BJ (cell line): ENCODE measurements at regions of chr2 and their contacts with region 1.

Region 1: DNA sequence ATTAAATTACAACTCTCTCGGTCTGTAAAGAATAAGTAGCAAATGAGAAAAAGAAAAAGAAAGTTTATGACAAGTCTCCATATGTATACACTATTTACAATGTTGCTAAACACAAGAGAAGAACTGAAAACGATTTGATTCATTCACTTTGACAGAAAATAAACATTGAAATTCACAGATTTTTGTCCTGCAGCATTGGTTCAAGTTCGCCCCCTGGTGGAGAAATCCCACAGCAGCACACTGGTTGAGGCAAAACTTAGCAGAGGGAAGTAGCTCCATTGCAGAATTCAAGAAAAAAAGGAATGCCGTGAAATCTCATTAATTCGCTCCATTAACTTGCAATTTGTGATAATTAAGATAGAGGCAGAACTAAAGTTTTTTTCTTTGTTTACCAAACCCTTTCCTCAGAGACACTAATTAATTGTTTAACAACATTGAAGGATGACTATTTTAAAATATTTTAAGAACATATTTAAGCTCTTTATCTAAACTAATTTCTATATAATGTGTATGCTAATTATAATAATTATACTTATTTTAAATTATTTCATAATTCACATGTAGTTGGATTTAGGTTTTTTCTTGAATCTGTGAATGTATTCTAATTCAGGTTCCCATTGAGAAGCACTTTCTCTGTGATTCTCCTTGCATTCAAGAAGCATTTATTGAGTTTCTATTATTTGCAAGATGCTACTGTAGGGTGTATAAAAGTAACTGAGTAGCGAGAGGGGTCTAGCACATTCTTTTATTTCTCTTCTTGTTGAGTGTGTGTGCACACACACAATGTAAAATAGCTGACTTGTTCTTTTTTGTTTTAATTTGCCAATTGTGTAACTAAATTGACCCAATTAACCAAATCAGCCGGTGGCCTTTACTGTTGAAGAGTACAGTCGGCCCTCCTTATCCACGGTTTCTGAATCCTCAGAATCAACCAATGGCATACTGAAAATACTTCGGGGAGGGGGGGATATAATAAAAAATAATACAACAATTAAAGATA is 74.1 kb downstream of the COL4A3 start:
- DNase-seq: no peak
- H3K4me3 ChIP-seq: no peak overlapping the region
- H3K27me3 ChIP-seq: no peaks in the 10 kb centered on the region; the same call in 1 of the 2 replicates
- CTCF ChIP-seq: peak; percentile 94

Region 2: GRCh38 chr2:227125506-227125905 is 113.0 kb before region 1 on chr2:
- CTCF ChIA-PET with region 1: interaction called, 88 read pairs
- POLR2A ChIA-PET with region 1: no interaction called
- DNase-seq: no peak
- H3K4me3 ChIP-seq: no peak overlapping the region
- H3K27me3 ChIP-seq: no peaks in the 10 kb centered on the region; the same call in 1 of the 2 replicates
- CTCF ChIP-seq: peak; percentile 15; the same call in 1 of the 2 replicates

Region 3: DNA sequence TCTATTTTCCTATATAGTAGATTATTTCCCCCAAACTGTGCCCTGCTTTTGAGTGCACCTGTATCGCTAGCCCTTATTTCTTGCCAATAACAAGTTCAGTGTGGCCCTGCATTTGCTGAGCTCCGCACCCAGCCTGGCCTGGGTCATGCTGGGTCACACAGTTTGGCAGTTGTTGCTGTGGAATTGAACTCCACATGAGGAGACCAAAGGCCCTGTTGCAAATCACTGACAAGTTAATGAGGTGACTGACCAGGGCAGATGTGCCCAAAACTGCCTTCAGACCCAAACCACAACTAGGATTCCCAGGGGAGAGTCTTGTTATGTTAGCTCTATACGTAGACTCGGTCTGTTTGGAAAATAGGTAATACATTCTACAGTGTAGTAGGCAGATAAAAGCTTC is 105.6 kb before region 1 on chr2:
- CTCF ChIA-PET with region 1: interaction called, 88 read pairs
- POLR2A ChIA-PET with region 1: no interaction called
- DNase-seq: no peak
- H3K4me3 ChIP-seq: no peak overlapping the region
- H3K27me3 ChIP-seq: no peaks in the 10 kb centered on the region; the same call in 1 of the 2 replicates
- CTCF ChIP-seq: no peak

Region 4: DNA sequence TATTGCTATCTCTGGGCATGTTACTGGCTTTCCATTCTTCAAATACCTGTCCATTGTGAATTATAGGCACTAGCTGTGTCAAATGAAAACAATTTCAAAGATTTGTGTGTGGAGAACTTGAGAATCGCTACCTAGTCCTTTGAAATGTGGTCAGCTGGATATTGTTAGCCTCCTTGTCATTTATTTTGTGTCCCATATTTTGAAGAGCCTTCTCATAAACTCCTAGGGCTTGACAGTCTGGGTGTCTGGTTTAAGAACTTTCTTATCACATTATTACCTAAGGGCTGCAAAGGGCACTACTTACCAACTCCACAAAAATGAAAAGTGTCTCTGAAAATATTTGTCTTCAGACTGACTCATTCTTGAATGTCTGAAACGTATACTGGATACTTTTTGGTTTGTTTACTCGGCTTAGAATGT is 23.9 kb before region 1 on chr2:
- CTCF ChIA-PET with region 1: no interaction called
- POLR2A ChIA-PET with region 1: no interaction called
- DNase-seq: no peak
- H3K4me3 ChIP-seq: no peak overlapping the region
- H3K27me3 ChIP-seq: no peaks in the 10 kb centered on the region
- CTCF ChIP-seq: no peak

Region 5: GRCh38 chr2:227252831-227253230 is 14.3 kb after region 1 on chr2:
- CTCF ChIA-PET with region 1: interaction called, 27 read pairs
- POLR2A ChIA-PET with region 1: no interaction called
- DNase-seq: no peak
- H3K4me3 ChIP-seq: no peak overlapping the region
- H3K27me3 ChIP-seq: no peaks in the 10 kb centered on the region
- CTCF ChIP-seq: no peak

Region 6: GRCh38 chr2:227766373-227766883 is 527.9 kb after region 1 on chr2:
- CTCF ChIA-PET with region 1: interaction called, 16 read pairs
- POLR2A ChIA-PET with region 1: no interaction called
- DNase-seq: peak; percentile 4
- H3K4me3 ChIP-seq: no peak overlapping the region
- H3K27me3 ChIP-seq: no peaks in the 10 kb centered on the region
- CTCF ChIP-seq: peak; percentile 86